CD8-positive, alpha-beta T cell (primary cell): ENCODE measurements at regions of chr2 and their contacts with region 1.

Region 1: GRCh38 chr2:216698895-216699294 is 3.5 kb upstream of the IGFBP5 start:
- DNase-seq: peak in 2 of 9 experiments; percentile 33 to 55
- ATAC-seq: peak; percentile 53
- H3K4me3 ChIP-seq: no peak overlapping the region
- H3K4me3 Mint-ChIP-seq: no peak overlapping the region
- H3K27ac ChIP-seq: no peak overlapping the region
- H3K27ac Mint-ChIP-seq: no peak overlapping the region
- H3K4me1 ChIP-seq: peaks cover 14% of the 10 kb centered on the region
- H3K4me1 Mint-ChIP-seq: peaks cover 9% of the 10 kb centered on the region
- H3K27me3 ChIP-seq: peaks cover 6 to 17% of the 10 kb centered on the region in 2 experiments
- H3K27me3 Mint-ChIP-seq: peaks cover 32% of the 10 kb centered on the region
- CTCF ChIP-seq: peak; percentile 22

Region 2: GRCh38 chr2:217166241-217166850 is 467.5 kb after region 1 on chr2:
- CTCF ChIA-PET with region 1: no interaction called
- POLR2A ChIA-PET with region 1: no interaction called
- intact Hi-C with region 1: loop called in 1 of 2 experiments (anchors 10 kb)
- DNase-seq: no peak
- ATAC-seq: no peak
- H3K4me3 ChIP-seq: no peak overlapping the region
- H3K4me3 Mint-ChIP-seq: no peak overlapping the region
- H3K27ac ChIP-seq: no peak overlapping the region
- H3K27ac Mint-ChIP-seq: no peak overlapping the region
- H3K4me1 ChIP-seq: peaks cover 8% of the 10 kb centered on the region
- H3K4me1 Mint-ChIP-seq: peaks cover 15% of the 10 kb centered on the region
- H3K27me3 ChIP-seq: no peaks in the 10 kb centered on the region
- H3K27me3 Mint-ChIP-seq: peaks cover 11% of the 10 kb centered on the region
- CTCF ChIP-seq: no peak

Region 3: GRCh38 chr2:217505303-217505702 is 806.4 kb after region 1 on chr2:
- CTCF ChIA-PET with region 1: interaction called, 3 read pairs
- POLR2A ChIA-PET with region 1: no interaction called
- intact Hi-C with region 1: loop called in 1 of 2 experiments (anchors 5 kb)
- DNase-seq: no peak
- ATAC-seq: no peak
- H3K4me3 ChIP-seq: no peak overlapping the region
- H3K4me3 Mint-ChIP-seq: no peak overlapping the region
- H3K27ac ChIP-seq: no peak overlapping the region
- H3K27ac Mint-ChIP-seq: no peak overlapping the region
- H3K4me1 ChIP-seq: no peaks in the 10 kb centered on the region
- H3K4me1 Mint-ChIP-seq: no peaks in the 10 kb centered on the region
- H3K27me3 ChIP-seq: no peaks in the 10 kb centered on the region
- H3K27me3 Mint-ChIP-seq: peaks cover 3% of the 10 kb centered on the region
- CTCF ChIP-seq: no peak

Region 4: GRCh38 chr2:218622606-218623365 is 1923.9 kb after region 1 on chr2:
- CTCF ChIA-PET with region 1: no interaction called
- POLR2A ChIA-PET with region 1: no interaction called
- intact Hi-C with region 1: no loop called
- DNase-seq: no peak
- ATAC-seq: no peak
- H3K4me3 ChIP-seq: no peak overlapping the region
- H3K4me3 Mint-ChIP-seq: no peak overlapping the region
- H3K27ac ChIP-seq: no peak overlapping the region
- H3K27ac Mint-ChIP-seq: no peak overlapping the region
- H3K4me1 ChIP-seq: no peaks in the 10 kb centered on the region
- H3K4me1 Mint-ChIP-seq: no peaks in the 10 kb centered on the region
- H3K27me3 ChIP-seq: no peaks in the 10 kb centered on the region
- H3K27me3 Mint-ChIP-seq: no peaks in the 10 kb centered on the region
- CTCF ChIP-seq: no peak